Naive thymus-derived CD4-positive, alpha-beta T cell (primary cell): ENCODE measurements at regions of chr7 and their contacts with region 1.

Region 1: DNA sequence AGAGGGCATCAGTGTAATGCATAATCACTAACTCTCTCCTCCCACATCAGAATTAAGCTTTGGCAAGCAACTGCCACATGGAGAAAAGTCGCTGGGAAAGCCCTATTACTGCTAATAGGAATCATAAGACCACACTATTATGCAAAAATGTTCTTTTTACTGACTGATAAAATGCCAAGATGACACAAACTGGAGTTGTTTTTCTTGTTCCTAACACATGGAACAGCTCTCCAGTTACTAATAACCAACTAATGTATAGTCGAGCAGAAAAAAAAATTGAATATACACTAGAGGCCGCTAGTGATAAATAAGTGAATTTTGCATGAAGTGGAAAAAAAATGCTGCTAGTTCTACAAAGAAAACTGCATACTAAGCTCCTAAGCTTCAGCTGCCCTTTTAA is 165.6 kb downstream of the TPK1 start:
- DNase-seq: peak in 2 of 9 donors; percentile 4 to 11
- ATAC-seq: no peak
- H3K4me3 ChIP-seq: no peak overlapping the region
- H3K4me3 Mint-ChIP-seq: no peak overlapping the region
- H3K27ac ChIP-seq: no peak overlapping the region
- H3K27ac Mint-ChIP-seq: no peak overlapping the region
- H3K4me1 ChIP-seq: no peaks in the 10 kb centered on the region
- H3K4me1 Mint-ChIP-seq: peaks cover 0 to 2% (median 0%) of the 10 kb centered on the region in 7 donors
- H3K27me3 ChIP-seq: no peaks in the 10 kb centered on the region
- H3K27me3 Mint-ChIP-seq: no peaks in the 10 kb centered on the region

Region 2: DNA sequence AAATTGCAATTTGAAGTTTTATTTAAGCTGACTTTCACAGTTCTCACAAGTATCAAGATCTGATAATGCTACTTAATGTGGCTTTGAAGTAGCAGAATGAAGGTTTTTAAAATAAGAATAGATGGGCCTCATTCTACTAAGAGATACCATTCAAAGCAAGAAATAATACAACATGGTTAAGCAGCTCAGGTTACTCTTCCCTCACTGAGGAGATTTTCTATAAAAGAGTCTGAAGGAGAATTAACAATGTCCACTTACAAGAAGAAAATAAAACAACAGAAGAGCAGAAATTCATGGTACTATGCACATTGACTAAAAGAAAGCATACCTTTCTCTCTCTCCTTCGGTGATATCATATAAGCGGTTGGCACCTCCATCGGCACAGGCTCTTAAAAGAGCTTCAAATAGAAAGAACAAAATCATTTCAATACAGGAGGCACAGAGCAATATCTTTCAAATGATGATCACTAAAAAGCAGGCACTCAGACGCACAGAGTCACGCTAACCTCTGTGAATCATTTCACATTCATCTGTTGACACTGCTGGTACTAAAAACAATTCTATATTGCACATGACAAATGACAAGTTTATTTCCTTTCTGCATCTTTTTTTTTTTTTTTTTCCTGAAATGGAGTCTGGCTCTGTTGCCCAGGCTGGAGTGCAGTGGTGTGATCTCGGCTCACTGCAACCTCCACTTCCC is 12.5 kb after region 1 on chr7:
- CTCF ChIA-PET with region 1: no interaction called
- POLR2A ChIA-PET with region 1: no interaction called
- intact Hi-C with region 1: no loop called
- DNase-seq: no peak
- ATAC-seq: no peak
- H3K4me3 ChIP-seq: no peak overlapping the region
- H3K4me3 Mint-ChIP-seq: no peak overlapping the region
- H3K27ac ChIP-seq: no peak overlapping the region
- H3K27ac Mint-ChIP-seq: no peak overlapping the region
- H3K4me1 ChIP-seq: no peaks in the 10 kb centered on the region
- H3K4me1 Mint-ChIP-seq: peaks cover 0 to 4% (median 0%) of the 10 kb centered on the region in 7 donors
- H3K27me3 ChIP-seq: no peaks in the 10 kb centered on the region
- H3K27me3 Mint-ChIP-seq: no peaks in the 10 kb centered on the region

Region 3: GRCh38 chr7:144854839-144855424 is 184.7 kb after region 1 on chr7:
- CTCF ChIA-PET with region 1: interaction called, 3 read pairs
- POLR2A ChIA-PET with region 1: no interaction called
- intact Hi-C with region 1: loop called in 1 of 2 experiments (anchors 5 kb)
- DNase-seq: no peak
- ATAC-seq: no peak
- H3K4me3 ChIP-seq: no peak overlapping the region
- H3K4me3 Mint-ChIP-seq: no peak overlapping the region
- H3K27ac ChIP-seq: no peak overlapping the region
- H3K27ac Mint-ChIP-seq: no peak overlapping the region
- H3K4me1 ChIP-seq: no peaks in the 10 kb centered on the region
- H3K4me1 Mint-ChIP-seq: no peaks in the 10 kb centered on the region
- H3K27me3 ChIP-seq: no peaks in the 10 kb centered on the region
- H3K27me3 Mint-ChIP-seq: peaks cover 0 to 4% (median 0%) of the 10 kb centered on the region in 5 donors

Region 4: GRCh38 chr7:145036604-145037405 is 366.6 kb after region 1 on chr7:
- CTCF ChIA-PET with region 1: no interaction called
- POLR2A ChIA-PET with region 1: no interaction called
- intact Hi-C with region 1: loop called in 1 of 2 experiments (anchors 2 kb)
- DNase-seq: peak in 7 of 9 donors; percentile 9 to 45 (median 37)
- ATAC-seq: peak; percentile 76
- H3K4me3 ChIP-seq: no peak overlapping the region
- H3K4me3 Mint-ChIP-seq: peak overlapping the region in 5 of 10 donors; percentile 22 to 57 (median 35)
- H3K27ac ChIP-seq: no peak overlapping the region
- H3K27ac Mint-ChIP-seq: no peak overlapping the region
- H3K4me1 ChIP-seq: no peaks in the 10 kb centered on the region
- H3K4me1 Mint-ChIP-seq: peaks cover 0 to 5% (median 4%) of the 10 kb centered on the region in 7 donors
- H3K27me3 ChIP-seq: no peaks in the 10 kb centered on the region
- H3K27me3 Mint-ChIP-seq: peaks cover 0 to 20% (median 6%) of the 10 kb centered on the region in 5 donors